Dendritic cell treated with granulocyte-macrophage colony-stimulating factor and Interleukin-4, amounts not matched to agents 40 ng/mL and 50 ng/mL, for 4 days (primary cell): ENCODE measurements at regions of chr7 and their contacts with region 1.

Region 1: DNA sequence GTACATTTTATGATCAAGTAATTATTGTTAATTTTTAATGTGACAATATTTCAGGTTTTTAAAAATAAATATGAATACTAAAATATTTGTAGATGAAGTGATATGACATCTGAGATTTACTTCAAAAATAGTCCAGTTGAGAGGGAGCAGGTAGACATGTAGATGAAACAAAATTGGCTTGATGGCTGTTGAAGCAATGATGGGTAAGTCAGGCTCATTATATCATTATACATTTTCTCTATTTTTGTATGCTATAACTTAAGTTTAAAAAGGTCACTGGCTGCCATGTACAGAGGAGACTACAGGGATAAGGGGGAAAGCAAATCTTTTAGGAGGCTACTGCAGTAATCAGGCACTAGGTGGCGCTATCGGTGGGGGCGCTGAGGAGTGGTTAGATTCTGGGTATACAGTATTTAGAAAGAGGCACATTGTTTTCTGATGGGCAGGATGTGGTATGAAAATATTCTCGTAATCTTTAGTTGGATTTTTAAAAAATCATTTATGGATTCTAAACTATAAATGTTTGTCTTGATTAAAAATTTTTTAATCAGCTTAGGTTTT is 189.8 kb upstream of the IMMP2L start:
- H3K4me3 Mint-ChIP-seq: no peak overlapping the region
- H3K27ac Mint-ChIP-seq: no peak overlapping the region
- H3K4me1 Mint-ChIP-seq: peaks cover 6% of the 10 kb centered on the region
- H3K27me3 Mint-ChIP-seq: peaks cover 2% of the 10 kb centered on the region

Region 2: DNA sequence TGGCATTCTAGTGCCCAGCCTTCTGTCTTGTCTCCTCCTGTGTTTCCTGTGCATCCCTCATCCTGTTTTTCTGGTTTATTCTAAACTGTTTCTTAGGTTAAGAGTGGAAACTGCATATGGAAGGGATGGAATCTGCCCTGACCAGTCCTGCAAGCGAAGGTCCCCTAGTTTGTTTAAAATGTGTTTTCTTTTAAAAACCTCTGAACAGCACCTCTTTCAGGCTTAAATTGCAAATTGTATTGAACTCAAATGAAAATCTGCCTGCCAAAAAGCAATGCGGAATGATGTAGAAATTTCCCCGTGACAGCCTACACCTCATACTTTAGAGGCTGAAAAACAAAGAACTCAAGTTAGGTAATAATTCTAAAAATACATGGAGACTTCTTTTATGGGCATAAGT is 33.0 kb after region 1 on chr7:
- intact Hi-C with region 1: no loop called
- H3K4me3 Mint-ChIP-seq: no peak overlapping the region
- H3K27ac Mint-ChIP-seq: no peak overlapping the region
- H3K4me1 Mint-ChIP-seq: no peaks in the 10 kb centered on the region
- H3K27me3 Mint-ChIP-seq: no peaks in the 10 kb centered on the region

Region 3: GRCh38 chr7:111841596-111842205 is 89.6 kb after region 1 on chr7:
- intact Hi-C with region 1: loop called (anchors 10 kb)
- H3K4me3 Mint-ChIP-seq: no peak overlapping the region
- H3K27ac Mint-ChIP-seq: no peak overlapping the region
- H3K4me1 Mint-ChIP-seq: peaks cover 6% of the 10 kb centered on the region
- H3K27me3 Mint-ChIP-seq: peaks cover 3% of the 10 kb centered on the region

Region 4: GRCh38 chr7:112414855-112415490 is 662.9 kb after region 1 on chr7:
- intact Hi-C with region 1: loop called (anchors 5 kb)
- H3K4me3 Mint-ChIP-seq: no peak overlapping the region
- H3K27ac Mint-ChIP-seq: no peak overlapping the region
- H3K4me1 Mint-ChIP-seq: no peaks in the 10 kb centered on the region
- H3K27me3 Mint-ChIP-seq: no peaks in the 10 kb centered on the region